Right ventricle myocardium inferior (tissue), 1 donor: ENCODE measurements at regions of chr3 and their contacts with region 1.

Region 1: DNA sequence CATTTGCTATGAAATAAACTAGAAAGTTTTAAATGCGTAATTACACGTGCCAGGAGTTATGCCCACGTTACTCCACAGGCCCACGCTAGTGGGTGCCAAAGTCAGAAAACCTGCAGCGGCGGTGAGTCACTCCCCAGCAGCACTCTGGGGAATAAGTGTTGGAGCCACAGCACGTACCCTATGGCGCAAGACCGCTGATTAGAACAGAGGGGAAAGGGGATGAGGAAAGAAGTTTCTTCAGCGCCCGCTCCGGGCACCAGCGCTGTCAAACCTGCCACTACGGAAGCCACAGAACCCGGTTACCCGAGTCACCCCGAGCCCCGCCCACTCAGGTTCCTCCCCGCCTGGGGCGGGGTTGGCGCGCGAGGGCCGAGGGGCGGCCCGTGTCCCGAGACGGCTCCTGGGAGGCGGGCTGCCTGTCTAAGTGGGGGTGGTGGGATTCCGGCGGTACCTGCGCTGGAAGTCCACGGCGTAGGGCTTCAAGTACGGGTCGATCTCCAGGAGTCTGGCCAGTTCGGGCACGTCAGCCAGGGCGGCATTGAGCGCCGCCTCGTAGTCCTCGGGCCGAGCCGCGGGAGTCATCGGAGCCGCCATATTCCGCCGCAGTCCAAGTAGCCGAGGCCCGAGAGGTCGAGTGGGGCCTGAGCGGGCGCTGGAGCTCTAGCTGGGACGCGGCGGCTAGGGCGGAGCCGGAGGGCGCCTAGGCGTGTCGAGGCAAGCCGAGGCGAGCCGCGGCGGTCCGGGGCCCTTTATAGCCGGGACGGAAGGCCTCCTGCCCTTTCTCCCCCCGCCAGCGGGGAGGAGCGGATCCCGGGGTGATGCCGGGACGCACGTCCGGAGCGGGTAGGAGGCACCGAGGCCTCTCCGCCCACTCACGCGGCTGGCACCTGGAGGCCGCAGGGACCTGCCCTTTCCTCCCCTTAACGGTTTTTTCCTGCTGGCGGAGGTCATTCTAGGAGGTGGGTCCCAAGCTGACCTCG is at the start of gene GBE1:
- DNase-seq: peak; percentile 96
- ATAC-seq: peak; percentile 94
- total RNA-seq, gene GBE1: 88.6 TPM

Region 2: DNA sequence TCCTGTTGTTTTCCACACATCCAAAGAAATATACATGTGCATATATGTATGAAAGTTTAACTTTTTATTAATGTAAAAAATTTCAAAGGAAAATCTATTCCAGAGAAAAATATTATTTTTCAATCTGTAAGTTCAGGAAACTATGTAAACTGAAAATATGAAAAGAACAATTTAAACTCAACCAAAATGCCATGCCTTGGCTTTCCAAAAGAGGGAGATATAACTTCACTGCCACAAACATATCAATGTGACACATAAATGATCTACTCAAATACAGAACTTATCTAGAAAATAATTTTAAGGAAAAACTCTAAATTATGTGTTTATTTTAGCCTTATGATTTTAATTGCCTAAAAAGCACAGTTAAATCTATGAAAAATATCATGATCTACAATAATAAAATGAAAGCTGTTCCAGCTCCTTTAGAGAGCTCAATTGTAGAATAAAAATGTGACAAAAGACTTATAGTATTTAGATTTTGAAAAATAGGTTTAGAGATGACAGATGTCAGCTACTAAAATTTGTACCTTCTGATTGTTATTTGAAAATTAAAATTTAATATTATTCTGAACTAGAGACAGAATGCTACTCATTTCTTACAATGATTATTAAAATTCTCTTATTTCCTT is 94.6 kb before region 1 on chr3:
- intact Hi-C with region 1: loop called (anchors 2 kb)
- DNase-seq: no peak
- ATAC-seq: no peak

Region 3: GRCh38 chr3:81676706-81677456 is 84.3 kb before region 1 on chr3:
- intact Hi-C with region 1: loop called (anchors 5 kb)
- DNase-seq: no peak
- ATAC-seq: no peak

Region 4: GRCh38 chr3:81716870-81717509 is 44.2 kb before region 1 on chr3:
- intact Hi-C with region 1: loop called (anchors 5 kb)
- DNase-seq: no peak
- ATAC-seq: peak; percentile 94

Region 5: DNA sequence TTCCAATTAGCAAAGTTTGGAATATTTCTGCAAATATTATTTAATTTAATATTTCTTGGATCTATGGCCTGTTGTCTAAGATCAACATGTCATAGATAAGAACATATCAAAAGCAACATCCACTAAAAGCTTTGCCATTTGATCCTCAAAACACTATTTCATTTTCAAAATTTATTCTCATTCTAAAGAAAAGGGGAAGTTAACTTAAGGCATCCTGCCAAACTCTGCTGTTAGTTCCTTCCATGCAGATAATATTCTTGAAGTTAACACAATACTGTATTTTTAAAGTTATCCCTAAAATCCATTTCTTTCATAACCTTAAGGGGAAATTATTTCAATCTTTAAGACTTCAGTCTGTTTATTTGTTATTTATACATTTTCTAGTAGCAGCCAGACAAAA is 28.5 kb after region 1 on chr3:
- intact Hi-C with region 1: loop called (anchors 2 kb)
- DNase-seq: no peak
- ATAC-seq: no peak

Region 6: DNA sequence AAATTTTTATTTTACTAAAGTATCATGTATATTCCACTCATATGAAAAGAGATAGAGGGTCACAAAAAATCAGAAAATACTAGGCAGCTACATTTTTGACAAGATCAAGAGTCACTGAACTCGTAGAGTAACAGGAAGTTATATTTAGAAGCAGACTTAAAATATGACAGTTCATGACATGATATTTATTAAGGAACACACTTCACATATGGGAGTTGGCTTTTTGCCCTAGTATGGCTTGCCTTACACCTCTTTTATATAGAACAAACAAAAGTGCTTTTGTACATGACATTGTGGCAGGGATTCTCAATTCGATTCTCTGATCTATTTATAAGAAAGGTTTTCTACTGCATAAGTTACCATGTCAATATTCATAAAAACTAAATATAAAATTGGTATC is 80.3 kb after region 1 on chr3:
- intact Hi-C with region 1: loop called (anchors 5 kb)
- DNase-seq: no peak
- ATAC-seq: no peak

Region 7: GRCh38 chr3:81864272-81864671 is 103.1 kb after region 1 on chr3:
- intact Hi-C with region 1: loop called (anchors 5 kb)
- DNase-seq: no peak
- ATAC-seq: no peak

Region 8: GRCh38 chr3:82157952-82158351 is 396.7 kb after region 1 on chr3:
- intact Hi-C with region 1: no loop called
- DNase-seq: no peak
- ATAC-seq: no peak